ENCODE measurements at regions of chr20 and their contacts with region 1.

Region 1: DNA sequence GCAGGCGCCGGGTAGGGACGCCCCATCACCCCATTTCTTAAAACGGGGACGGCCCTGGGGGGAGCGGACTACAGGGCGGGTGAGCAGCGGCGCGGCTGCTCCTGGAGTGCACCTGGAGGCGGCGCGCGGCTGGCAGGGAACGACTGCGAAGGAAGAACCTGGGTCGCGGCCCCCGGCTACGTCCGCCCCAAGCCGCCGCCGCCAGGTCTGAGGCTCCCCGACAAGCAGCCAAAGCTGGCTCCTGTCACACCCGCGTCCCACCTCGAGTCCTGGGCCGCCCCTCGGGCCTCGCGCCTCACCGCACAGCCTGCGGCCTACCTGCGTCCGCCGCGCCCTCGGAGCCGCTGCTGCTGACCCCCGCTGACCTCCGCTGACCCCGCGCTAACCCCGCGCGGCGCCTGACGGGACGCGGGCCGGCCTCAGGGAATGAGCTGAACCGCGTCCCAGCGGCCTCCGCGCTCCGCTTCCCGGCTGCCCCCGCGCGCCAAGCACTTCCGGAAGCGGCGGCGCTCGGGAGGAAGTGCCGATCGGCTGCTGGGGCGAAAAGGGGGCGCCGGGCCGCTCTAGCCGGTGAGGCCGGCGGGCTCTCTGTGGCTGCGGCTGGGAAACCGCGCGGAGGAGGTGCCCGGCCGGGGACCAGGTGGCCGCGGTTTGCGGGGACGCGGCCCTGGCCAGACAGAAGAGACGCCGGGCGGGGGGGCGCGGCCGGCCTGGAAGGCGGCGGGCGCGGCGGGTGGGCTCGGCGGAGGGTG is at the starts of genes ARFRP1 and ZGPAT:
- H3K4me3 ChIP-seq: peak within 1 kb of the TSS; percentile 81
- H3K27ac ChIP-seq: peak within 1 kb of the TSS; percentile 71
- H3K4me1 ChIP-seq: 0 out of 2 replicates have a peak, but pooled peaks cover 3% of the 10 kb centered on the region
- CTCF ChIP-seq: no peak

Region 2: GRCh38 chr20:63574156-63574828 is 133.4 kb before region 1 on chr20 and contains the start of gene HELZ2:
- CTCF ChIA-PET with region 1: no interaction called
- POLR2A ChIA-PET with region 1: no interaction called
- H3K4me3 ChIP-seq: peak within 1 kb of the TSS; percentile 70
- H3K27ac ChIP-seq: peak within 1 kb of the TSS; percentile 37; the same call in 1 of the 2 replicates
- H3K4me1 ChIP-seq: 0 out of 2 replicates have a peak, but pooled peaks cover 3% of the 10 kb centered on the region
- CTCF ChIP-seq: no peak

Region 3: GRCh38 chr20:63733186-63734081 is 25.7 kb after region 1 on chr20:
- CTCF ChIA-PET with region 1: interaction called, 3 read pairs
- POLR2A ChIA-PET with region 1: interaction called, 11 read pairs
- H3K4me3 ChIP-seq: no peak overlapping the region
- H3K27ac ChIP-seq: no peak overlapping the region
- H3K4me1 ChIP-seq: no peaks in the 10 kb centered on the region
- CTCF ChIP-seq: no peak

Region 4: GRCh38 chr20:63740627-63741354 is 33.1 kb after region 1 on chr20:
- CTCF ChIA-PET with region 1: interaction called, 3 read pairs
- POLR2A ChIA-PET with region 1: interaction called, 13 read pairs
- H3K4me3 ChIP-seq: peak overlapping the region; percentile 54
- H3K27ac ChIP-seq: peak overlapping the region; percentile 79
- H3K4me1 ChIP-seq: no peaks in the 10 kb centered on the region; the same call in 1 of the 2 replicates
- CTCF ChIP-seq: peak; percentile 46

Region 5: GRCh38 chr20:63835021-63835858 is 127.5 kb after region 1 on chr20:
- CTCF ChIA-PET with region 1: no interaction called
- POLR2A ChIA-PET with region 1: no interaction called
- H3K4me3 ChIP-seq: no peak overlapping the region
- H3K27ac ChIP-seq: no peak overlapping the region
- H3K4me1 ChIP-seq: no peaks in the 10 kb centered on the region
- CTCF ChIP-seq: no peak